Activated naive CD4-positive, alpha-beta T cell treated with anti-CD3 and anti-CD28 coated beads for 36 hours (primary cell): ENCODE measurements at regions of chr13 and their contacts with region 1.

Region 1: DNA sequence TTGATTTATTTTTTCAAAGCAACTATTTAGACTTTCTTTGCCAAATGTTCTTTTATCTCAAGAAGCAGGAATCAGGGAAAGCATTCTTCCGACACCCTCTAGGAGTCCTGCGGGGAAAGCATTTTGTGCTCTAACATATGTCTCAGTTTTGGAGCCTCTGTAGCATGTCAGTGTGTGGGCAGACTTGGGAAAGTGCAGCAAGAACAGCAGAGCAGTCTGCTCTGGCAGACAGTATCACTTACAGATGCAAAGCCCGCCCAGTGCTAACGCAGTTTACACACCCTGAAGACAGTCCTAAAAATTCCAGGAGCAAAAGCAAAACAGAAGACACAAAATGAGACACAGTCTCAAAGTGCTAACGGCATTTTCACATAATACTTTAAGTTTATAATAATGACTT is 393.5 kb downstream of the KLF12 start:
- DNase-seq: no peak
- H3K4me3 Mint-ChIP-seq: peak overlapping the region; percentile 58
- H3K27ac Mint-ChIP-seq: no peak overlapping the region
- H3K4me1 Mint-ChIP-seq: peaks cover 41% of the 10 kb centered on the region
- H3K27me3 Mint-ChIP-seq: no peaks in the 10 kb centered on the region

Region 2: DNA sequence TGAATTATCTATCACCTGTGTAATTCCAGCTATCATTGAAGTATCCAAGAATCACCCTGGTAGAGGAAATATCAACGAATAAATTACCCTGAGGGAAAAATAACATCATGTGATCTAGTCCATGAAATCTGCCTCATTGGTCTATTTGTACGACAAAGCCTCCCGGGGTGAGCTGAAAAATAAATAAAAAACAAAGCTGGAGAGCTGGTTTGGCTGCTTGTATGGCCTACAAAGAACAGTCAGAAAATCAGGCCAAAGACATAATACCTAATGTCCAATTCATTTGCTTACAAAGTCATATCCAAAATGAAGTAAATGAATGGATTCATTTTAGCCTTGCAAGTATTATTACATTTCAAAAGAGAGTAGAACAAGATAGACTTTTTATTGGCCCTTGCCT is 56.4 kb before region 1 on chr13:
- CTCF ChIA-PET with region 1: no interaction called
- intact Hi-C with region 1: no loop called
- DNase-seq: no peak
- H3K4me3 Mint-ChIP-seq: no peak overlapping the region
- H3K27ac Mint-ChIP-seq: no peak overlapping the region
- H3K4me1 Mint-ChIP-seq: no peaks in the 10 kb centered on the region
- H3K27me3 Mint-ChIP-seq: no peaks in the 10 kb centered on the region

Region 3: GRCh38 chr13:73722120-73722519 is 18.5 kb before region 1 on chr13:
- CTCF ChIA-PET with region 1: interaction called, 3 read pairs
- intact Hi-C with region 1: loop called (anchors 1 kb)
- DNase-seq: peak; percentile 35
- H3K4me3 Mint-ChIP-seq: no peak overlapping the region
- H3K27ac Mint-ChIP-seq: no peak overlapping the region
- H3K4me1 Mint-ChIP-seq: peaks cover 38% of the 10 kb centered on the region
- H3K27me3 Mint-ChIP-seq: no peaks in the 10 kb centered on the region

Region 4: GRCh38 chr13:73754727-73755292 is 14.1 kb after region 1 on chr13:
- CTCF ChIA-PET with region 1: interaction called, 3 read pairs
- intact Hi-C with region 1: loop called (anchors 2 kb)
- DNase-seq: peak; percentile 20
- H3K4me3 Mint-ChIP-seq: no peak overlapping the region
- H3K27ac Mint-ChIP-seq: no peak overlapping the region
- H3K4me1 Mint-ChIP-seq: peaks cover 33% of the 10 kb centered on the region
- H3K27me3 Mint-ChIP-seq: no peaks in the 10 kb centered on the region